ENCODE measurements at regions of chr1 and their contacts with region 1.

Region 1: DNA sequence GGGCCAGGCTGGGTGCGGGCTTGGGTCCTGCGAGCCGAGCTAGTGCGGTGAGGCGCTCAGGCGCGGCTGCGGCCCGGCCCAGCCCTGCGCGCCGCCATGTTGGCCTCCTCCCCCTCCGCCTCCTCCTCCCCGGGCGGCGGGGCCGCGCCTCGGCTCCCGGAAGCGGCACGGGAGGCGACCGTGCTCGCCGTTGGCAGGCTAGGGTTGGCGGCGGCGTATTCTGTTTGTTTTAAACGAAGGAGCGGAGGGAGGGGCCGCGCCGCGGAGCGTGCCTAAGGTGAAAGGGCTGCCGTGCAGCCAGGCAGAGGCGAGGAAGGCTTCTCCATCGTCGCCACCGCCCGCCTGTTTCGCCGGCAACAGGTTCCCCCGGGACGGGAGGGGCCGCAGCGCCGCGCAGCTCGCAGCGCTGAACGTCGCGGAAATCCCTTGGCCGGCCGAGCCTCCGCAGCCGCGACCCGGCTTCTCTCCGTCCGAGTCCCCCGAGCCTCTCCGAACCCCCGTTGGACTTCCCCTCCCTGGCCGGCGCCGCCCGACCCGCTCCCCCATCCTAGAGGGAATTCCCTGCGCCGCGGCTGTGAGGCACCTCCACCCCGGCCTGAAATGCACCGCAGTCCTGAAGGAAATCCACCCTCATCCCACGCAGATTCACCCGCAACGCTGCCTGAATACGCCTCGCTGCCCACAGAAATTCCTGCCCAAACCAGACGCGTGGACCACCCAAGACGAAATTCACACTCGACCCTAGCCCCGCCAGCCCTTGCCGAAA is at the start of gene USP24:
- DNase-seq: peak; percentile 81
- H3K4me3 Mint-ChIP-seq: peak within 1 kb of the TSS; percentile 98
- H3K27ac Mint-ChIP-seq: peak within 1 kb of the TSS; percentile 97
- H3K4me1 Mint-ChIP-seq: peaks cover 43% of the 10 kb centered on the region
- H3K27me3 Mint-ChIP-seq: no peaks in the 10 kb centered on the region
- total RNA-seq, gene USP24: 37.1 to 39.7 TPM

Region 2: DNA sequence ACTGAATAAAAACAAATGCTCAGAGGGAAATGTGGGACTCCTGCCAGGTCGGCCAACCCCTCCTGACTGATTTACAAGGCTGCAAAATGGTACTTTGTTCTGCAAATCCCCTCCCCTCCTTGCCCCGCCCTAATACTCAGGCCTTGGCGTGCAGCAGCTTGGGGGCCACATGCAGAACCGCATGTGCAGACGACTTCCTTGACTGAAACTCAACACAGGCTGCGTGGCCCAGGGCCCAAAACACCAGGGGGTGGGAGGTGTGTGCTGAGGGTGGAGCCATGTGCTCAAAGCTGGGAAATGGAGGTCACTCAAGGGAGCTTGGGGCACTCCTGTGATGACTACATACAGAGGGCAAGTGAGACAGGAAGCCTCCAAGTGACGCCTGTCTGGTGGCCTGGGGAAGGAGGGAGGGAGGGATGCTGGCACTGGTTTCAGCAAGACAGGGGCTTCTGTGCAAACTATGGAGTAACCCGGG is 928.2 kb before region 1 on chr1:
- CTCF ChIA-PET with region 1: interaction called, 3 read pairs
- intact Hi-C with region 1: loop called (anchors 10 kb)
- DNase-seq: peak; percentile 92
- H3K4me3 Mint-ChIP-seq: peak overlapping the region; percentile 69
- H3K27ac Mint-ChIP-seq: peak overlapping the region; percentile 86
- H3K4me1 Mint-ChIP-seq: peaks cover 92% of the 10 kb centered on the region
- H3K27me3 Mint-ChIP-seq: no peaks in the 10 kb centered on the region

Region 3: GRCh38 chr1:55140546-55140983 is 74.9 kb before region 1 on chr1:
- CTCF ChIA-PET with region 1: interaction called, 10 read pairs
- intact Hi-C with region 1: loop called (anchors 2 kb)
- DNase-seq: peak; percentile 89
- H3K4me3 Mint-ChIP-seq: no peak overlapping the region
- H3K27ac Mint-ChIP-seq: peak overlapping the region; percentile 81
- H3K4me1 Mint-ChIP-seq: peaks cover 15% of the 10 kb centered on the region
- H3K27me3 Mint-ChIP-seq: no peaks in the 10 kb centered on the region

Region 4: DNA sequence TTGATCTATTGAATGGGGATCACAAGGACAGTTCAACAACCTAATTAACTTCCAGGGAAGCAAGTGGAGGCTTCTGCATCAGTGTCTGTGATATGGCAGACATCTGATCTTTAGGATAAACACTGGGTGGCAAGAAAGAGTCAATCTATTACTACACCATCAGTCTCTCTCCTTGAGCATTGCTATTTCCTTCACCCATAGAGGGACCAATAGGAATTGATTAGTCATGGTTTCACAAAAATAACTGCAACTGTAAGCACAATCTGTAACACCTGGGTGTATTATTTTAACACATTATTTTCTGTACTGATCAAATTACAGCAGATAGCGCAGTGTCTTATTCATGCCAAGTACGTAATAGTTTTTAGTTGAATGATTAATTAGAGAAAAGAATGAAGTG is 50.5 kb before region 1 on chr1:
- CTCF ChIA-PET with region 1: interaction called, 4 read pairs
- intact Hi-C with region 1: loop called (anchors 1 kb)
- DNase-seq: no peak
- H3K4me3 Mint-ChIP-seq: no peak overlapping the region
- H3K27ac Mint-ChIP-seq: peak overlapping the region; percentile 60
- H3K4me1 Mint-ChIP-seq: peaks cover 46% of the 10 kb centered on the region
- H3K27me3 Mint-ChIP-seq: no peaks in the 10 kb centered on the region

Region 5: GRCh38 chr1:55195521-55196233 is 19.8 kb before region 1 on chr1:
- CTCF ChIA-PET with region 1: interaction called, 4 read pairs
- intact Hi-C with region 1: loop called (anchors 1 kb)
- DNase-seq: no peak
- H3K4me3 Mint-ChIP-seq: no peak overlapping the region
- H3K27ac Mint-ChIP-seq: peak overlapping the region; percentile 76
- H3K4me1 Mint-ChIP-seq: peaks cover 53% of the 10 kb centered on the region
- H3K27me3 Mint-ChIP-seq: no peaks in the 10 kb centered on the region

Region 6: GRCh38 chr1:55277377-55278130 is 62.1 kb after region 1 on chr1:
- CTCF ChIA-PET with region 1: interaction called, 5 read pairs
- intact Hi-C with region 1: loop called (anchors 1 kb)
- DNase-seq: peak; percentile 94
- H3K4me3 Mint-ChIP-seq: peak overlapping the region; percentile 5
- H3K27ac Mint-ChIP-seq: peak overlapping the region; percentile 37
- H3K4me1 Mint-ChIP-seq: peaks cover 22% of the 10 kb centered on the region
- H3K27me3 Mint-ChIP-seq: peaks cover 2% of the 10 kb centered on the region